Breast epithelium (tissue), 4 donors: ENCODE measurements at regions of chr2 and their contacts with region 1.

Region 1: DNA sequence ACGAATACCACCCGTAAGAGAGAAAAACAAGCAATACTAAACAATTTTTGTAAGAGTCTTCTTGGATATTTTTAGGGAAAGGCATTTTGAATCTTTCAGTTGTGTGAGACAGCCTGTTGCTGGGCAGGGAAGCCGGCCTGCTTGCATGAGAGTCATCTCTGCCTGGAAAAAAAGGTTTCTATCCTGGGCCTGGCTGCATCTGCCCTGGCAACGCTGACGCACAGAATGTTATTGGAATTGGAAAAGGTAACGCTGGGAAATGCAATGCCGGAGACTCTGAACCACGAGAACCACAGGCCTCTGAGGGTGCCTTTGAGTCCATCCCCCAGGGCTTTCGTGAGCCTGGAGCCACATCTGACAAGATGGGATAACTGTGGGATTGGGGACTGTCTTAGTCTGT is 17.9 kb upstream of the NPAS2 start:
- DNase-seq: no peak
- H3K4me3 ChIP-seq: no peak overlapping the region
- H3K27ac ChIP-seq: no peak overlapping the region
- H3K4me1 ChIP-seq: peaks cover 0 to 6% of the 10 kb centered on the region in 2 donors
- H3K27me3 ChIP-seq: no peaks in the 10 kb centered on the region
- CTCF ChIP-seq: no peak
- POLR2A ChIP-seq: no peak

Region 2: DNA sequence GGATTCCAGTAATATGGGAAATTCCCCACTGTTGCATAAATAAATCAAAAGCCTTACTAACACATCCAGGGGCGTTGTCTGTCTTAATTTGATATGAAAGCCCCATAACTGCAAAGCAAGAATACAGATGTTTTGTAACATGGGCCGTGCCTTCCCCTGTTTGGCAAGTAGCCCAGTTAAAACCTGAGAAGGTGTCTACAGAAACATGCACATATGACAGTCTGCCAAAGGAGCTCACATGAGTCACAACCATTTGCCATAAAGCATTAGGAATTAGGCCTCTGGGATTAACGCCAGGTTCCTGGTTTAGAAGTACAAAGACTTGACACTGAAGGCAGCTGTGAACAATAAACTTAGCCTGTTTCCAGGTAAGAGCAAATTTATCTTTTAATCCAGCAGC is 436.6 kb before region 1 on chr2:
- intact Hi-C with region 1: no loop called
- DNase-seq: peak in 1 of 2 donors; percentile 52
- H3K4me3 ChIP-seq: no peak overlapping the region
- H3K27ac ChIP-seq: no peak overlapping the region
- H3K4me1 ChIP-seq: no peaks in the 10 kb centered on the region
- H3K27me3 ChIP-seq: no peaks in the 10 kb centered on the region
- CTCF ChIP-seq: no peak
- POLR2A ChIP-seq: no peak

Region 3: DNA sequence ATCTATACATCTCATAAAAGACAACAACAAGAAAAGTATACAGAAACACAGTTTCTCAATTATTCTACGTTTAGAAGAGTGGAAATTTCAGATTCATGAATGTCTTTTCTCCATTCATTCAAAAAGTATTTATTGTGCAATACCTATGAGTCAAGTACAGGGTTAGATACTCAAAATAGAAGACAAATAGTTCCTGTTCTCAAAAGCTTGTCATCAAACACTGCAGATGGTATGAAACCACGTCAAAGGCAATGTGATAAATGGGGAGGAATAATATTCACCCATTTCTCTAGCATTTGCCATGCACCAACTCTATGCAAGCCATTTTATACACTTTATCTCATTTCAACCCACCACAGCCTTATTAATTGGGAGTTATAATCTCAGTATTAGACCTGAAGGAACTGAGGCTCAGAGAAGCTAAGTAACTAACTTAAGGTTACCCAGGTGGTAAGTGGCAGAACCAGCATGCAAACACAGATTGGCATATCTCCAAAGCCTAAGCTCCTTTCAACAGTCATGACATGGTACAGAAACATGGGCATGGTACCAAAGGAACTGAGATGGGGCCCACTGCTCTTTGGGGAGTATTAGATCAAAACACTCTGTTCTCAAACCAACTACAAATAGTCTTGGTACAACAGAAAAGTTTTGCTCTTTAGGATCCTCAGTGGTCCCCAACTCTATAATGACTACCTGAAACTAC is 49.3 kb before region 1 on chr2:
- intact Hi-C with region 1: loop called (anchors 10 kb)
- DNase-seq: no peak
- H3K4me3 ChIP-seq: no peak overlapping the region
- H3K27ac ChIP-seq: peak overlapping the region in 1 of 2 donors; percentile 11
- H3K4me1 ChIP-seq: no peaks in the 10 kb centered on the region
- H3K27me3 ChIP-seq: peaks cover 0 to 10% of the 10 kb centered on the region in 2 donors
- CTCF ChIP-seq: no peak
- POLR2A ChIP-seq: no peak